Left colon (tissue), 2 donors: ENCODE measurements at regions of chr11 and their contacts with region 1.

Region 1: DNA sequence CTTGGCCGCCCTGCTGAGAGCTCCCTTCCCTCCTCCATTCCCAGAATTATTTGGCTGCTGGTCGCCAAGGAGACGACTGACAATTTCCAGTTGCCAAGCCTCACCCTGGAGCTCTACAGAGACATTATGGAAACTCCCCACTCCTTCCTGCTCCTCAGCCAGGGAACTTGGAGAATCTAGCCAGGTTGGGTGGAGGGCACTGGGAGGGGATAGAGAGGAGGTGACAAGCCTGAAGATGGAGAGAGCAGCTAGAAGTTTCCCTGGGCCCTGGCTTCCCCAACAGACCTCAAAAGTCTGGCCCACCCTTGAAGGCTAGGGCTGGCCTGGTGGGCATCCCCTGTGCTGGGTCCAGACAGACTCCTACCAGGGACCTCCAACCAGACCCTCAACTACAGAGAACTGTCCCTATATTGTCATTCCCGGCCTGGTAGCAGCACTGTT is 6.7 kb upstream of the VSIG10L2 start:
- DNase-seq: no peak
- ATAC-seq: no peak

Region 2: GRCh38 chr11:126194121-126194543 is 255.0 kb after region 1 on chr11:
- intact Hi-C with region 1: loop called in 1 of 2 experiments (anchors 5 kb)
- DNase-seq: no peak
- ATAC-seq: peak; percentile 77